KBM-7 (cell line): ENCODE measurements at regions of chr20 and their contacts with region 1.

Region 1: GRCh38 chr20:4717816-4718570 is 3.7 kb upstream of the PRND start:
- DNase-seq: no peak

Region 2: GRCh38 chr20:4457566-4458543 is 260.1 kb before region 1 on chr20:
- in situ Hi-C with region 1: no loop called
- DNase-seq: no peak

Region 3: GRCh38 chr20:4613718-4614620 is 104.0 kb before region 1 on chr20:
- in situ Hi-C with region 1: loop called (anchors 10 kb)
- DNase-seq: peak; percentile 58